A673 (cell line): ENCODE measurements at regions of chr6 and their contacts with region 1.

Region 1: GRCh38 chr6:64330694-64331307 is 695.2 kb downstream of the PHF3 start:
- DNase-seq: peak; percentile 59
- H3K4me3 ChIP-seq: no peak overlapping the region
- H3K27ac ChIP-seq: no peak overlapping the region
- H3K4me1 ChIP-seq: no peaks in the 10 kb centered on the region
- H3K27me3 ChIP-seq: no peaks in the 10 kb centered on the region
- CTCF ChIP-seq: peak; percentile 73

Region 2: GRCh38 chr6:63923139-63923739 is 407.6 kb before region 1 on chr6:
- CTCF ChIA-PET with region 1: no interaction called
- POLR2A ChIA-PET with region 1: no interaction called
- intact Hi-C with region 1: loop called (anchors 1 kb)
- DNase-seq: peak; percentile 62
- H3K4me3 ChIP-seq: no peak overlapping the region
- H3K27ac ChIP-seq: no peak overlapping the region
- H3K4me1 ChIP-seq: no peaks in the 10 kb centered on the region
- H3K27me3 ChIP-seq: no peaks in the 10 kb centered on the region
- CTCF ChIP-seq: peak; percentile 73

Region 3: DNA sequence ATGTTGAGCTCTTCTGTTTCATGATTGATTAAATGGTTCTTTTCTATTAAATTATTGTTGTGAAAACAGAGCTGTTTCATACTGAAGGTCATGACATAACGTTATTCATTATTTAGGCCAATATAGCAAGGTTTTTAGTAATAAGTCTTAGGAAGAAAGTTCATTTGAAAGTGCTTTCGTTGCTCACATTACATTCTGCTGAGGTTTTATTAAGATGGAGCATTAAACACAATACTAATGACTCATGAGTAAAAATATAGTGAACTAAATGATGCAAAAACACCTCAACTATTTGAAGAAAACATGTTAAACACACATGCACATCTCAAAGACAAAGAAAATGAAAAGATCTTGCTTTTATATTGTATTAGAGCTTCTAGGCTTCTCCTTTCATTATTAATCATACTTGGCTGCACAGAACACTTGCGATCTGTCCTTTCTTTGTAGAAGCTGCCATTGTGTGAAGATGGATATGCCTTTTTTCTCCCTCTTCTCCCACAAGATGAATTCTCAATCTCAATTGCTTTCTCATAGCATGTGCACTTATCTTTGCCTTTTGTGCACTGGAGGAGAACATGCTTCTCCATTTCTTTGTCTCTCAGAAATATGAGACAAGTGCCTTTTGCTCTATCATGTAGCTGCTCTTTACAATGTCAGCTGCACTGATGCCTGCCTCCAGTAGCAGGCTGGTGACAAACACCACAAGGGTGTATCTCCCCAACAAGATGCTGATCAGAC is 382.8 kb before region 1 on chr6:
- CTCF ChIA-PET with region 1: no interaction called
- POLR2A ChIA-PET with region 1: interaction called, 10 read pairs
- intact Hi-C with region 1: no loop called
- DNase-seq: no peak
- H3K4me3 ChIP-seq: no peak overlapping the region
- H3K27ac ChIP-seq: no peak overlapping the region
- H3K4me1 ChIP-seq: peaks cover 6% of the 10 kb centered on the region
- H3K27me3 ChIP-seq: no peaks in the 10 kb centered on the region
- CTCF ChIP-seq: no peak

Region 4: DNA sequence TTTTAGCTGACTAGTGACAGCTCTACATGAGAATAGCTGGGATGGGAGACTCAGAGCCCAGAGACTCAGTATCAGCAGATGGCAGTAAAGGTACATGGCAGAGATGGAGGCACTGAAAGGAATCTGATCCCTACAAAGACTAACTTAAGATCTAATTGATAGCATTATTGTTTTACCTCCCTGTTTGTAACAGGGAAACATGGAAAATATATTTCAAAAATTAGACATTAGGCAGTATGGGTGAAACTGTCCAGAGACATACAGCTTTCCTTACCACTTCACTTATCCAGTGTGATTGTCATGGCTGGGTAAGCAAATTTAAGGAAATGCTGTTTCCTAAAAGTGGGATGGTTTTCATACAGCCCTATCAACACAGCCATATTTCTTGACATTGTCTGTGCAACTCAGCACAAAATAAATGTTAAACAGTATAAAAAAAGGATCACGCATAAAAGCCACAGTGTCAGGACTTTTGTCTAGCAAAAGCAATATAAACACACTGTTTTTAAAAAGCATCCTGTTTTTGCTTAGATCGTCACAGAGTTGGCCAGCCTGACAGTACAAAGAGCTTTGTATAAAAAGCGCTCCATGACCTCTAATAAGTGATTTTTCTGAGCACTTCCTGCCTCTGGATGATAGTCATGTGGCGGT is 318.3 kb before region 1 on chr6:
- CTCF ChIA-PET with region 1: interaction called, 8 read pairs
- POLR2A ChIA-PET with region 1: no interaction called
- intact Hi-C with region 1: loop called (anchors 1 kb)
- DNase-seq: peak; percentile 56
- H3K4me3 ChIP-seq: no peak overlapping the region
- H3K27ac ChIP-seq: no peak overlapping the region
- H3K4me1 ChIP-seq: no peaks in the 10 kb centered on the region
- H3K27me3 ChIP-seq: no peaks in the 10 kb centered on the region
- CTCF ChIP-seq: peak; percentile 68

Region 5: GRCh38 chr6:64280569-64280968 is 50.2 kb before region 1 on chr6:
- CTCF ChIA-PET with region 1: interaction called, 8 read pairs
- POLR2A ChIA-PET with region 1: no interaction called
- intact Hi-C with region 1: loop called (anchors 5 kb)
- DNase-seq: peak; percentile 36
- H3K4me3 ChIP-seq: no peak overlapping the region
- H3K27ac ChIP-seq: no peak overlapping the region
- H3K4me1 ChIP-seq: no peaks in the 10 kb centered on the region
- H3K27me3 ChIP-seq: peaks cover 5% of the 10 kb centered on the region
- CTCF ChIP-seq: peak; percentile 53

Region 6: DNA sequence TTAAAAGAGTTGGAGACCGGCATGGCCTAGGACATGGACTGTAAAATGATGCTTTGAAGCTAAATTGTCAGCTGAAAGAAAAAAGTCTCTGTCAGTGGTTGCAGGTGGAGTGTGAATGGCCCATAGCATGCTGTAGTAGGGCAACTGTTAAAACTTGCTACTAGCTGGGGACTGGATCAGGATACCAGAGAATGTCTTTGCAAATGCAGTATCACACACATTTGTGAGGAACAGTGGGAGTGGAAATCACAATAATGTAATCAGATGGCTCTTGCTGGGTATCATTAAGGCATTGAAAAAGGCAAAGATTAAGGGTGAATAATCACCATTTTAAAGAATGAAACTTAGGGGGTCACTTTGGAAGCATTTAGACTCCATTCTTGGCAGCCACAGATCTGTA is 638.3 kb after region 1 on chr6:
- CTCF ChIA-PET with region 1: no interaction called
- POLR2A ChIA-PET with region 1: no interaction called
- intact Hi-C with region 1: no loop called
- DNase-seq: no peak
- H3K4me3 ChIP-seq: no peak overlapping the region
- H3K27ac ChIP-seq: no peak overlapping the region
- H3K4me1 ChIP-seq: no peaks in the 10 kb centered on the region
- H3K27me3 ChIP-seq: no peaks in the 10 kb centered on the region
- CTCF ChIP-seq: no peak